Testis (tissue), 5 donors: ENCODE measurements at regions of chr6 and their contacts with region 1.

Region 1: GRCh38 chr6:142946181-142946923 is 1.4 kb upstream of the HIVEP2 start:
- DNase-seq: peak; percentile 96
- H3K4me3 ChIP-seq: peak overlapping the region; percentile 85 to 94
- H3K27ac ChIP-seq: peak overlapping the region; percentile 95 to 99
- H3K4me1 ChIP-seq: peaks cover 14% of the 10 kb centered on the region
- H3K27me3 ChIP-seq: no peaks in the 10 kb centered on the region
- CTCF ChIP-seq: no peak
- POLR2A ChIP-seq: no peak

Region 2: GRCh38 chr6:142845624-142846458 is 100.5 kb before region 1 on chr6:
- intact Hi-C with region 1: loop called (anchors 10 kb)
- DNase-seq: peak; percentile 89
- H3K4me3 ChIP-seq: peak overlapping the region in 1 of 2 donors; percentile 16
- H3K27ac ChIP-seq: peak overlapping the region; percentile 63 to 74
- H3K4me1 ChIP-seq: peaks cover 19% of the 10 kb centered on the region
- H3K27me3 ChIP-seq: no peaks in the 10 kb centered on the region
- CTCF ChIP-seq: no peak
- POLR2A ChIP-seq: no peak

Region 3: DNA sequence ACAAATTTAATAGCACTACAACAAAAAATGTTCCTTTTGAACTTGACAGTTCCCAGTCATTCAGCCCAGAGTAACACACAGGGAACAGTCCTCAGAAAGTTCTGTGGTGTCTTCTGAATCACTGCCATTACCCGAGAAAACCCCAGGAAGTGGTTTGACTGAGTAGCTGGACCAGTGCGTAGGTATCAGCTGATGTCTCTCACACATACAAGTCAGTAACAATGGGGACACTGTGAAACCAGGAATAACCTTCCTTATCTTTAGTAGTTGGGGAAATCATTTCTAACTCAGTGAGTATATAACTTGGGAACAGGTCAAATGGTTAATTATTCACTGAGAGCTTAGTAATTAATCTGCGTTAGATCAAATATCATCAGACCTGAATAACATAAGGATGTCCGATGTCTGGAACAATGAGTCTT is 74.4 kb before region 1 on chr6:
- intact Hi-C with region 1: loop called (anchors 10 kb)
- DNase-seq: peak; percentile 57
- H3K4me3 ChIP-seq: no peak overlapping the region
- H3K27ac ChIP-seq: peak overlapping the region in 1 of 2 donors; percentile 63
- H3K4me1 ChIP-seq: peaks cover 15% of the 10 kb centered on the region
- H3K27me3 ChIP-seq: no peaks in the 10 kb centered on the region
- CTCF ChIP-seq: no peak
- POLR2A ChIP-seq: no peak

Region 4: GRCh38 chr6:143323729-143324470 is 377.5 kb after region 1 on chr6:
- intact Hi-C with region 1: no loop called
- DNase-seq: no peak
- H3K4me3 ChIP-seq: no peak overlapping the region
- H3K27ac ChIP-seq: no peak overlapping the region
- H3K4me1 ChIP-seq: no peaks in the 10 kb centered on the region
- H3K27me3 ChIP-seq: no peaks in the 10 kb centered on the region
- CTCF ChIP-seq: no peak
- POLR2A ChIP-seq: no peak